ENCODE measurements at regions of chr14 and their contacts with region 1.

Region 1: DNA sequence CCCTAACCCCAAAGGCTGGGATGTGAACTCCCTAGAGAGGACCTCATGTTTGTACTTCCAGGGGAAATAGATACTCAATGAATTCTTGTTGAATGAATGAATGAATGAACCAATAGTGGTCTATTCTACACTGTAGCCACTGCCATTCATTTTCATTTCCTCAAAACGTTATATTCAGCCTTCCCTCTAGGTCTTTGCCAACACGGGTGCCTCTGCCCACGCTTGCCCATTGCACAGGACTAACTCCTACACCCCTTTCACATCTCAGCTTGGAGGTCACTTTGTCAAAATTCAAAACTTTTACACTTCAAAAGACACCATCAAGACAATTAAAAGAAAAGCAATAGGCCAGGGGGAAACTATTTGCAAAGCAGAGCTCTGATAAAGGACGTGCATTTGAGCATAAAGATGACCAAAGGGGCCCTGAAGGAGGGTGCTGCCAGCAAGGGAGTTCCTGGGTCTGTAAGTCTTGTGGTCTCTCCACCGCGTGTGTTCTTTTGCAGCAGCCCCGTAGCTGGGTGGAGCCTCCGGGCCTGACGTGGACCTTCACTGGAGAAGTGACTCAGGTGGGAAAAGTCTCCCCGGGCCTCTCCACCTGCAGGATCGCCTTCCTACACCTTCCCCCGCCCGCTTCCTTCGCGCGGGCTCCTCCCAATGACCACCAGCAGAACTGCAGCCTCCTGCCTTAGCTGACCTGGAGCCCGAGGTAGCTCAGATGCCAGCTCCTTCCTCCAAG is 31.5 kb downstream of the TMEM63C start:
- DNase-seq: peak; percentile 13
- H3K4me3 Mint-ChIP-seq: no peak overlapping the region
- H3K27ac Mint-ChIP-seq: no peak overlapping the region
- H3K4me1 Mint-ChIP-seq: no peaks in the 10 kb centered on the region
- H3K27me3 Mint-ChIP-seq: peaks cover 3% of the 10 kb centered on the region

Region 2: DNA sequence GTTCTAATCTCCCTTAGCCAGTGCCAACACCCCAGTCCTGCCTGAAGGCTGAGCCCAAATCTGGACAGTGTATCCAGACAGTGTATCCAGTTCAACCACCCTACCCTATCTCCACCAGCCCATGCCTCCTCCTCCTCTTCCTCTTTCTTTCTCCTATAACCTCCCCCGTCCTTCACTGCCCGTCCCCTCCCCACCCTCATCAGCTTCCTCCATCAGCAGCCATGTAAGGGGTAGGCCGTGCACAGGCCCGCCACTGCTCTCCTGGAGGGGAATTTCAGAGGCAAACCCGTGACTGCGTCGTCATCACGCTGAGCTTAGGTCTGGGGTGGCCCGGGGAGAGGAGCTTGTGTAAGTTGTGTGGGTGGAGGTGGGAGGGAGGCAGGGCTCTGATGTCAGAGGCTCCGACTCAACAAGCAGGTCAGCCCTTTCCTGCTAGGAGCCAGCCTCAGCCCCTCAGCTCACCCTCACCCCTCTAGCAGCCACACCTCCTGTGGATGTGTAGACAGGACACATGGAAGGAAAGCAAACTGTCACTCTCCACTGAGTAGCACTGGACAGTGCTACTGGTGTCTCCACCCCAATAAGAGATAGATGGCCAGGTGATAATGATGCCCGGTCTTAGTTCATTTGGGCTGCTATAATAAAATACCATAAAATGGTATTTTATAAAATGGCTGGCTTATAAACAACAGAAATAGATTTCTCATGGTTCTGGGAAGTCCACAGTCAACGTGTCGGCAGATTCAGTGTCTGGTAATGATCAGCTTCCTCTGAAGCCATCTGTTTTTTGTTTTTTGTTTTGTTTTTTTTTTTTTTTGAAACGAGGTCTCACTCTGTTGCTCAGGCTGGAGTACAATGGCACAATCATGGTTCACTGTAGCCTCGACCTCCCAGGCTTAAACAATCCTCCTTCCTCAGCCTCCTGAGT is 235.1 kb before region 1 on chr14:
- intact Hi-C with region 1: no loop called
- DNase-seq: peak; percentile 75
- H3K4me3 Mint-ChIP-seq: no peak overlapping the region
- H3K27ac Mint-ChIP-seq: peak overlapping the region; percentile 86
- H3K4me1 Mint-ChIP-seq: peaks cover 31% of the 10 kb centered on the region
- H3K27me3 Mint-ChIP-seq: no peaks in the 10 kb centered on the region

Region 3: DNA sequence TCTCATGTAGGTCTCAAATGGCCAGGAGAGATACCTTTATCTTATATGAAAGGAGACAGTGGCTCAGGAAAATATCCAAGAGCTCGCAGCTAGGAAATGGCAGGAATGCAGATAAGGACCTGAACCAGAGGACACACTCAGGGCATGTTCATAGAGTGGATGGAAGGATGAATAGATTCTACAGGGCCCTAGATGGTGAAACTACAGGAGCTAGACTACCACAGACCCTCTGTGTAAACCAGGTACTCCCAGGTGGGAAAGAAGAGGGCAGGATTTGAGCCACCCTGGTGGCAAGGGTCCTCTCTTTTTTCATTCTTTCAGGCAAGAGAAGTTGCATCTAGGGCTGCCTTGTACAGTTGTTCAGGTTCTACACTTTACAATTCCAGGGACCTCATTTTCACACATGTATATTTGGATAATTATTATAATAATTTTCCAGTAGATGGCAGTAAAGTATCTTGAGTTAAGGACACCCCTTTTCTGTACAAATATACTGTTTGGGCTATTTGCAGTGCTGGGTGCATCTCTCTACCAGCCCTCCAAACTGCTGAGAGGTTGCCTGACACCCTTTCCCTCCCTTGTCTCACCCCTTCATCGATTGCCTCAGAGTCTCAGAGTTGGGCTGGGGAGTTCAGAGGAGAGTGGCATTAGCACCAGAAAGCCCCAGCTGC is 61.1 kb before region 1 on chr14:
- intact Hi-C with region 1: loop called (anchors 2 kb)
- DNase-seq: no peak
- H3K4me3 Mint-ChIP-seq: no peak overlapping the region
- H3K27ac Mint-ChIP-seq: no peak overlapping the region
- H3K4me1 Mint-ChIP-seq: no peaks in the 10 kb centered on the region
- H3K27me3 Mint-ChIP-seq: peaks cover 18% of the 10 kb centered on the region

Measured in activated T-helper 2 cell treated with anti-CD3 and anti-CD28 coated beads, Interferon-gamma antibody, Interleukin-2, Interleukin-4, amounts not matched to agents 10 μg/mL and 5 μg/mL and 100 μg/mL, durations not matched to agents 14 hours and 24 hours and 36 hours (primary cell).